B cell (primary cell): ENCODE measurements at regions of chrX and their contacts with region 1.

Region 1: DNA sequence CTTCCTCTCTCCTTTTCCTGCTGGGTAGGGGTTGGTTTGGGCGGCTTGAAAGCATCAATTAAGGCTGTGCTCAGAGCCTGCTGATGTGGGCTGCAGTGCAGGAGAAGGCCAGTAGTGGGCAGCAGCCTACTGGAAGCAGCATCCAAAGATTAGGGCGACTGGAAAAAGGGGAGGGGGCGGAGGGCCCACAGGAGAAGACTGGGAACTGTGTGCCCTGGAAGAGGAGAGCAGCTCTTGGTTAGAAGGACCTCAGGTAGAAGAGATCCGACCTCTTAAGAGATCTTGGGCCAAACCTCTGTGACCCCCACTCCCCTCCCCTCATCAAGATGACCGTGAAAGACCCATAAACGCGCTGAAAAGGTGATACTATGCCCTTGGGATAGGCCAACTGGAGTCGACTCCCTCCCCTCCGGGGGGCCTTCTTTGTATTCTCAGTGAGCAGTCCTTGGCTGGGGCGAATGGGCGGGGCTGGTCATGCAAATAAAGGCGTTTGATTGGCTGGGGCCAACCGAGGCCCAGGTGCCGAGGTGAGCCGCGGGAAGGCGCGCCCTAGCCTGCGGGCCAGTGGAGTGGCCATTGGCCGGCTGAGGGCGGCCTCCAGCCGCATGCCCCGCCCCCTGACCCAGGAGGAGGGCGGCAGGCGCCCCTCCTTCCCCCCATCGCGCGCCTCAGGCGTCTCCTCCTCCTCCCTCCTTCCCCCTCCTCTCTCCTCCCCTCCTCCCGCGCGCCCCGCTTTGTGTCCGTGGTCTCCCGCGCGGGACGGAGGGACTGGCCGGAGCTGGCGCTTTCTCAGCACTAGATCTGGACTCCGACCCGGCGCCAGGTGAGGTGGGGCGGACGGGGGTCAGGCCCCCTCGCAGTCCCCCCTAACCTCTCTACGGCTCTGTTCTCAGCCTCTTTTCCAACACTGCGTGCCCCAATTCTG is 10.1 kb downstream of the DLG3 start:
- DNase-seq: peak; percentile 72
- ATAC-seq: peak; percentile 67
- H3K4me3 ChIP-seq: peak overlapping the region in 4 of 5 experiments; percentile 36 to 63 (median 52)
- H3K4me3 Mint-ChIP-seq: peak overlapping the region; percentile 84
- H3K27ac ChIP-seq: peak overlapping the region in 1 of 2 donors; percentile 25
- H3K27ac Mint-ChIP-seq: peak overlapping the region; percentile 46
- H3K4me1 ChIP-seq: peaks cover 27 to 36% of the 10 kb centered on the region in 2 donors
- H3K4me1 Mint-ChIP-seq: peaks cover 40% of the 10 kb centered on the region
- H3K27me3 ChIP-seq: no peaks in the 10 kb centered on the region
- H3K27me3 Mint-ChIP-seq: no peaks in the 10 kb centered on the region
- CTCF ChIP-seq: peak; percentile 69

Region 2: DNA sequence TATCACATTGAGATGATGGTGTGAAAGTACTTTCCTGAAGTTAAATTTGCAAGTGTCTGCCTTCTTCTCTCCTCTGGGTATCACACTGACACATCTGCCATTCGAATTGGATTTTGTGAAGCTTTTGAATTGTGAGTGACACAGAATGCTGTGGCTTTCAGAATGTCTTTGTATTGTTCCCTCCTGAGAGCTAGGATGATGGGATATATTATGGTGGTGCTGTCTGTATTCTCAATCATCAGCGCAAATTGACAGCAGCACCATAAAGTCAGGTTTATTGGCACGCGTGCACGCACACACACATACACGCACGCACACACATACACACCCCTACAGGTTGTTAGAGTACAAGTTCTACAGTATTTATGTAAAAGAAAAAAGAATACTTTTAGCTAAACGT is 548.3 kb before region 1 on chrX:
- CTCF ChIA-PET with region 1: no interaction called
- POLR2A ChIA-PET with region 1: no interaction called
- intact Hi-C with region 1: no loop called
- DNase-seq: no peak
- ATAC-seq: no peak
- H3K4me3 ChIP-seq: no peak overlapping the region
- H3K4me3 Mint-ChIP-seq: no peak overlapping the region
- H3K27ac ChIP-seq: no peak overlapping the region
- H3K27ac Mint-ChIP-seq: no peak overlapping the region
- H3K4me1 ChIP-seq: no peaks in the 10 kb centered on the region
- H3K4me1 Mint-ChIP-seq: no peaks in the 10 kb centered on the region
- H3K27me3 ChIP-seq: no peaks in the 10 kb centered on the region
- H3K27me3 Mint-ChIP-seq: no peaks in the 10 kb centered on the region
- CTCF ChIP-seq: no peak

Region 3: DNA sequence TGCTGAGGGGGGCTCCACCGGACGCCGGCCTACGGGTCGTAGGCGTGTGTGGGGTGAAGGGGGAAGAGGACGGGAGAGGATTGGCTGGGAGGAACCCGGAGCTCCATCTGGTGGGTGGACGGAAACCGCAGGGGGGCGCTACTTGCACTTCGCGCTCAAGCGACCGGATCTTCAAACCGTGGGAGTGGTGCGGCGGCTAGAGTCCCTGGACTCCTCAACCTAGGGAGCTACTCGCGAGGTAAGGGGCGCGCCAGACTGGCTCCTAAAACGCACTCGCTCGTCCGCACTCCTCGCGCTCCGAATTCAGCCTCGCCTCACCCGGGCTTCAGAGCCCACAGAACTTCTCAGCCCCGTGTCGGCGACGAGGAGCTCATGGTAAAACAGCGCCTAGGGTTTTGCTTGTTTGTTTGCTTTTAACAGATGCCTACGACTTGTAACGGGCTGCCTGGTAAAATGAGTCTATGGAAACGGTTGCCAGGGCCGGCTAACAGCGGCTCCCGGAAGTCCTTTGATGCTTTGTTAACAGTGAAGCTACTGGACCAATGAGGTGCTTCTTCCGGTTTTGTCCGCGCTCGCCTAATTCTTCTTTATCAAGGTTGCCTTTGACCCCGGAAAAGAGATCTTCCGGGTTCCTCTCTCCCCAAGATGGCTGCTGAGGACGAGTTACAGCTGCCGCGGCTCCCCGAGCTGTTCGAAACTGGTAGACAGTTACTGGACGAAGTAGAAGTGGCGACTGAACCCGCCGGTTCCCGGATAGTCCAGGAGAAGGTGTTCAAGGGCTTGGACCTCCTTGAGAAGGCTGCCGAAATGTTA is 321.2 kb before region 1 on chrX and contains the start of gene IGBP1:
- CTCF ChIA-PET with region 1: no interaction called
- POLR2A ChIA-PET with region 1: no interaction called
- intact Hi-C with region 1: loop called (anchors 5 kb)
- DNase-seq: peak; percentile 88
- ATAC-seq: peak; percentile 79
- H3K4me3 ChIP-seq: peak within 1 kb of the TSS; percentile 78 to 95 (median 89)
- H3K4me3 Mint-ChIP-seq: peak within 1 kb of the TSS; percentile 99
- H3K27ac ChIP-seq: peak within 1 kb of the TSS; percentile 90 to 95
- H3K27ac Mint-ChIP-seq: peak within 1 kb of the TSS; percentile 97
- H3K4me1 ChIP-seq: peaks cover 16% of the 10 kb centered on the region in 2 donors
- H3K4me1 Mint-ChIP-seq: peaks cover 27% of the 10 kb centered on the region
- H3K27me3 ChIP-seq: no peaks in the 10 kb centered on the region
- H3K27me3 Mint-ChIP-seq: no peaks in the 10 kb centered on the region
- CTCF ChIP-seq: peak; percentile 65
- total RNA-seq, gene IGBP1: 51.8 and 54.7 TPM in 2 replicates

Region 4: GRCh38 chrX:70433848-70434351 is 20.8 kb before region 1 on chrX:
- CTCF ChIA-PET with region 1: interaction called, 5 read pairs
- POLR2A ChIA-PET with region 1: interaction called, 3 read pairs
- intact Hi-C with region 1: loop called (anchors 1 kb)
- DNase-seq: peak; percentile 83
- ATAC-seq: peak; percentile 70
- H3K4me3 ChIP-seq: peak overlapping the region; percentile 6 to 82 (median 72)
- H3K4me3 Mint-ChIP-seq: peak overlapping the region; percentile 92
- H3K27ac ChIP-seq: peak overlapping the region; percentile 68
- H3K27ac Mint-ChIP-seq: peak overlapping the region; percentile 93
- H3K4me1 ChIP-seq: peaks cover 9 to 17% of the 10 kb centered on the region in 2 donors
- H3K4me1 Mint-ChIP-seq: peaks cover 19% of the 10 kb centered on the region
- H3K27me3 ChIP-seq: no peaks in the 10 kb centered on the region
- H3K27me3 Mint-ChIP-seq: peaks cover 13% of the 10 kb centered on the region
- CTCF ChIP-seq: peak; percentile 69

Region 5: GRCh38 chrX:70494441-70494840 is 39.7 kb after region 1 on chrX:
- CTCF ChIA-PET with region 1: no interaction called
- POLR2A ChIA-PET with region 1: no interaction called
- intact Hi-C with region 1: no loop called
- DNase-seq: no peak
- ATAC-seq: no peak
- H3K4me3 ChIP-seq: no peak overlapping the region
- H3K4me3 Mint-ChIP-seq: no peak overlapping the region
- H3K27ac ChIP-seq: no peak overlapping the region
- H3K27ac Mint-ChIP-seq: no peak overlapping the region
- H3K4me1 ChIP-seq: no peaks in the 10 kb centered on the region
- H3K4me1 Mint-ChIP-seq: no peaks in the 10 kb centered on the region
- H3K27me3 ChIP-seq: no peaks in the 10 kb centered on the region
- H3K27me3 Mint-ChIP-seq: no peaks in the 10 kb centered on the region
- CTCF ChIP-seq: no peak

Region 6: DNA sequence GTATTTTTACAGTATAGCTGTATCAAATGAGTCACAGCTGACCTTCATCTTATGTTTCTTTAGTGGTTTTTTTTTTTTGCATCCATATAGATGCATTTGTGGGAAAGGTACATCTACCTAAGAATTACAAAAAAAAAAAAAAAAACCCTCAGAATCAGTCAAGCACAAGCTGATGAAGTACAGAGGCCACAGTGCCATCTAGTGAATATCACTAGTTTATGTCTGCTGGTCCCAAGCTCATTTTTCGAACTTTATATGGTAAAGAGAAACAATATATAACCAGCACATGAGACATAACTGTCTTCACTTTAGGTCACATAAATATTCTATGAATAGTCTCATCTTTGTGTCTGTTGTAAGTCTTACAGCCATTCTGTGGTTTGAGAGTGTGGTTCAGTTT is 210.0 kb after region 1 on chrX:
- CTCF ChIA-PET with region 1: no interaction called
- POLR2A ChIA-PET with region 1: no interaction called
- intact Hi-C with region 1: loop called (anchors 2 kb)
- DNase-seq: peak; percentile 3
- ATAC-seq: no peak
- H3K4me3 ChIP-seq: no peak overlapping the region
- H3K4me3 Mint-ChIP-seq: no peak overlapping the region
- H3K27ac ChIP-seq: no peak overlapping the region
- H3K27ac Mint-ChIP-seq: no peak overlapping the region
- H3K4me1 ChIP-seq: no peaks in the 10 kb centered on the region
- H3K4me1 Mint-ChIP-seq: no peaks in the 10 kb centered on the region
- H3K27me3 ChIP-seq: no peaks in the 10 kb centered on the region
- H3K27me3 Mint-ChIP-seq: peaks cover 5% of the 10 kb centered on the region
- CTCF ChIP-seq: no peak

Region 7: GRCh38 chrX:71068049-71068763 is 613.5 kb after region 1 on chrX and contains the start of gene SNX12:
- CTCF ChIA-PET with region 1: no interaction called
- POLR2A ChIA-PET with region 1: no interaction called
- intact Hi-C with region 1: loop called (anchors 10 kb)
- DNase-seq: peak; percentile 93
- ATAC-seq: peak; percentile 93
- H3K4me3 ChIP-seq: peak within 1 kb of the TSS; percentile 74 to 79 (median 76)
- H3K4me3 Mint-ChIP-seq: peak within 1 kb of the TSS; percentile 96
- H3K27ac ChIP-seq: peak within 1 kb of the TSS; percentile 74 to 85
- H3K27ac Mint-ChIP-seq: peak within 1 kb of the TSS; percentile 96
- H3K4me1 ChIP-seq: peaks cover 0 to 12% of the 10 kb centered on the region in 2 donors
- H3K4me1 Mint-ChIP-seq: peaks cover 17% of the 10 kb centered on the region
- H3K27me3 ChIP-seq: no peaks in the 10 kb centered on the region
- H3K27me3 Mint-ChIP-seq: no peaks in the 10 kb centered on the region
- CTCF ChIP-seq: no peak
- total RNA-seq, gene SNX12: 32.6 and 42.9 TPM in 2 replicates

Region 8: DNA sequence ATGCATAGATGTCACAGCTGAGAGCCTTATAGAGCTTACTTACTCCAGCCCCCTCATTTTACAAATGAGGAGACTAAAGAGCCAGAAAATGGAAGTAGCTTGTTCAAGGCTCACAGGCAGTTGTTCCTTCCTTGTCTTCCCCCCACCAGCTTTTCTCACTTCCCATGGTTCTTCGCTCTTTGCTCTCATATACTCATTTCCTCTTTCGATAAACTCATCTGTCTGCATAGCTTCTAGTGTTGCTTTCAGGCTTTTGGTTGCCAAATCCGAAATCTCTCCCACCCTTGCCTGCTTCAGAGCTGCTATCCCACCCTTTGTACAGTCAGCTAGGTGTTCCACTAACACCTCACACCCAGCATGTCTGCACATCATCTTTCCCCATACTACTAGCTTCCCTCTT is 743.4 kb after region 1 on chrX:
- CTCF ChIA-PET with region 1: no interaction called
- POLR2A ChIA-PET with region 1: no interaction called
- intact Hi-C with region 1: loop called (anchors 5 kb)
- DNase-seq: peak; percentile 68
- ATAC-seq: peak; percentile 84
- H3K4me3 ChIP-seq: peak overlapping the region; percentile 19 to 68 (median 59)
- H3K4me3 Mint-ChIP-seq: peak overlapping the region; percentile 97
- H3K27ac ChIP-seq: peak overlapping the region; percentile 25 to 53
- H3K27ac Mint-ChIP-seq: peak overlapping the region; percentile 92
- H3K4me1 ChIP-seq: peaks cover 15 to 21% of the 10 kb centered on the region in 2 donors
- H3K4me1 Mint-ChIP-seq: peaks cover 28% of the 10 kb centered on the region
- H3K27me3 ChIP-seq: no peaks in the 10 kb centered on the region
- H3K27me3 Mint-ChIP-seq: no peaks in the 10 kb centered on the region
- CTCF ChIP-seq: no peak